ENCODE measurements at regions of chr4 and their contacts with region 1.

Region 1: DNA sequence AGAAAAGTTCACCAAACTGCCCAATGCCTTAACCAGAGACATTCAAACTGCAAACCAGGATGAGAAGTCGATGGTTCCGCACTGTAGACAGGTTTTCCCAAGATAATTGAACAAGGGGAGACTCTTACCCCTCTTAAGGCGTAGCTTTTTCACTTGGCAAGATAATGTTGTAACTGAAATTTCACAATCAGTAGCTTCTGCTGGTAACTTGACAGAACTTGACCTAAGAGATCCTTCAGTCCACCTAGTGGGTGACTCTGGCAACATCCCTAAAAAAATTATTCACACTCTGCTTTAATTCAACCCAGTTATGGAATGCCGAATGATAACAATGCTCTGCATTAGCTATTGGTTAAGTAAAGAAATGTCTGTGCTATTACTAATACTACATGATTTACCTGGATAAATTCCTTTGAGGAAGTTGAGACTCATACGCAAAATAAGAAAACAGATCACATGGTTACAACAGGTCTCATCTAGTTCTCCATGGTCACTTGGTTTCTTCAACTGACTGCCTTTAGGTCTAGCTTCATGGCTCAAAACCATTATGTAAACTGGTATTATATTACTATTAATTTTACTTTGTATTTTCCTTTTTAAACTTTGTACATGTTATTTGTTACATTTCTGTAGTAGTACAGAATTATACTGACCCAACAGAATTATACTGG is 9.1 kb downstream of the ELF2 start:
- DNase-seq: no peak
- H3K4me3 ChIP-seq: no peak overlapping the region
- H3K27ac ChIP-seq: no peak overlapping the region
- H3K4me1 ChIP-seq: peaks cover 7% of the 10 kb centered on the region
- H3K27me3 ChIP-seq: no peaks in the 10 kb centered on the region
- CTCF ChIP-seq: peak in 1 of 3 donors; percentile 15
- EP300 ChIP-seq: no peak
- POLR2A ChIP-seq: no peak

Region 2: DNA sequence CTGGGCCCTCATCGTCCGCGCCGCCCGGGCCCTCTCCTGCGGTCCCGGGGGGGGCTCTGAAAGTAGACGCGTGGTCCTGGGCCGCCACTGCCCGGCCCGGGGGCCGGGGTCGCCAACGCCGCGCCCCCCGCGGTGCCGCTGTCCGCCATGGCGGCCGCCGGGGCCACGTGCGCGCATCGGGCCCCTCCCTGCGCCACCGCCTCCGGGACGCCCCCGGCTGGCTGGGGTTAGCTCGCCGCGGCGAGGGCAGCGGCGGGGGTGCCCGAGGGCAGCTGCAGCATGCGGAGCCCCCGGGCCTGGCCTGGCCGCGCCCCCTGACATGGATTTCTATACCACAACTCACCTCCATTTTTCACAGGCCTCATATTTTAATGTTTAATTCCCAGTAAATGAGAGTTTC is 52.7 kb before region 1 on chr4:
- intact Hi-C with region 1: loop called in 1 of 4 experiments (anchors 10 kb)
- DNase-seq: no peak
- H3K4me3 ChIP-seq: no peak overlapping the region
- H3K27ac ChIP-seq: no peak overlapping the region
- H3K4me1 ChIP-seq: no peaks in the 10 kb centered on the region
- H3K27me3 ChIP-seq: no peaks in the 10 kb centered on the region
- CTCF ChIP-seq: no peak
- EP300 ChIP-seq: no peak
- POLR2A ChIP-seq: no peak

Region 3: DNA sequence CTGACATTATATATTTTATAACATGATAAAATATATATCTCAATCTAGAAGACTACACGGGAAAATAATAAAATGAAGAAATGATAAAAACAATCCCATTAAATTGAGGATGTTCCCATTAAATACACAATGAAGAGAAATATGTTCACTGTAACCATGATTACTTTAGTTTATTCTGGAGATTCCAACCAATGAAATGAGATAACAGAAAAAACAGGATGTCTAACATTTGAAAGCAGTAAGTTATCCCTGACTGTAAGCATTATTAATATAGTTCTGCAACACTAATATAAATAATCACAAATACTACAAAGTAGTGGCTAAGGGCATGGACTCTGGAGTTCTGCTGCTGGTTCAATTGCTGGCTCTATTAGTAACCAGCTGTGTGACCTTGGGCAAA is 1796.0 kb after region 1 on chr4:
- intact Hi-C with region 1: no loop called
- DNase-seq: no peak
- H3K4me3 ChIP-seq: no peak overlapping the region
- H3K27ac ChIP-seq: no peak overlapping the region
- H3K4me1 ChIP-seq: no peaks in the 10 kb centered on the region
- H3K27me3 ChIP-seq: no peaks in the 10 kb centered on the region
- CTCF ChIP-seq: no peak
- EP300 ChIP-seq: no peak
- POLR2A ChIP-seq: no peak